Activated CD4-positive, alpha-beta T cell treated with anti-CD3 and anti-CD28 coated beads for 36 hours (primary cell): ENCODE measurements at regions of chr14 and their contacts with region 1.

Region 1: GRCh38 chr14:58297762-58298476 is 436 bp upstream of the ARID4A start:
- DNase-seq: peak; percentile 99
- ATAC-seq: peak; percentile 89
- H3K4me3 Mint-ChIP-seq: no peak overlapping the region
- H3K27ac Mint-ChIP-seq: no peak overlapping the region
- H3K4me1 Mint-ChIP-seq: peaks cover 38% of the 10 kb centered on the region
- H3K27me3 Mint-ChIP-seq: no peaks in the 10 kb centered on the region

Region 2: GRCh38 chr14:57268161-57269069 is 1029.5 kb before region 1 on chr14 and contains the starts of genes AP5M1 and EXOC5:
- CTCF ChIA-PET with region 1: no interaction called
- POLR2A ChIA-PET with region 1: no interaction called
- intact Hi-C with region 1: loop called in 1 of 2 experiments (anchors 2 kb)
- DNase-seq: peak; percentile 96
- ATAC-seq: peak; percentile 93
- H3K4me3 Mint-ChIP-seq: peak within 1 kb of the TSS; percentile 90
- H3K27ac Mint-ChIP-seq: peak within 1 kb of the TSS; percentile 99
- H3K4me1 Mint-ChIP-seq: peaks cover 53% of the 10 kb centered on the region
- H3K27me3 Mint-ChIP-seq: no peaks in the 10 kb centered on the region
- total RNA-seq, gene AP5M1: 30.8 to 32.7 TPM
- total RNA-seq, gene EXOC5: 66.5 to 80.2 TPM

Region 3: GRCh38 chr14:58199726-58200479 is 98.0 kb before region 1 on chr14 and contains the start of gene ACTR10:
- CTCF ChIA-PET with region 1: interaction called, 4 read pairs
- POLR2A ChIA-PET with region 1: interaction called, 13 read pairs
- intact Hi-C with region 1: loop called (anchors 1 kb)
- DNase-seq: peak; percentile 93
- ATAC-seq: peak; percentile 93
- H3K4me3 Mint-ChIP-seq: peak within 1 kb of the TSS; percentile 97
- H3K27ac Mint-ChIP-seq: peak within 1 kb of the TSS; percentile 92
- H3K4me1 Mint-ChIP-seq: peaks cover 38% of the 10 kb centered on the region
- H3K27me3 Mint-ChIP-seq: no peaks in the 10 kb centered on the region
- total RNA-seq, gene ACTR10: 31.2 to 32.3 TPM

Region 4: GRCh38 chr14:58244556-58245387 is 53.1 kb before region 1 on chr14 and contains the start of gene PSMA3:
- CTCF ChIA-PET with region 1: interaction called, 11 read pairs
- POLR2A ChIA-PET with region 1: interaction called, 15 read pairs
- intact Hi-C with region 1: loop called (anchors 1 kb)
- DNase-seq: peak; percentile 98
- ATAC-seq: peak; percentile 93
- H3K4me3 Mint-ChIP-seq: peak within 1 kb of the TSS; percentile 96
- H3K27ac Mint-ChIP-seq: peak within 1 kb of the TSS; percentile 96
- H3K4me1 Mint-ChIP-seq: peaks cover 40% of the 10 kb centered on the region
- H3K27me3 Mint-ChIP-seq: no peaks in the 10 kb centered on the region
- total RNA-seq, gene PSMA3: 342 to 425 TPM

Region 5: GRCh38 chr14:58280954-58281787 is 16.7 kb before region 1 on chr14:
- CTCF ChIA-PET with region 1: interaction called, 6 read pairs
- POLR2A ChIA-PET with region 1: interaction called, 11 read pairs
- intact Hi-C with region 1: loop called (anchors 1 kb)
- DNase-seq: peak; percentile 56
- ATAC-seq: peak; percentile 87
- H3K4me3 Mint-ChIP-seq: peak overlapping the region; percentile 50
- H3K27ac Mint-ChIP-seq: peak overlapping the region; percentile 95
- H3K4me1 Mint-ChIP-seq: peaks cover 75% of the 10 kb centered on the region
- H3K27me3 Mint-ChIP-seq: no peaks in the 10 kb centered on the region

Region 6: GRCh38 chr14:58362798-58363412 is 65.0 kb after region 1 on chr14:
- CTCF ChIA-PET with region 1: no interaction called
- POLR2A ChIA-PET with region 1: no interaction called
- intact Hi-C with region 1: no loop called
- DNase-seq: no peak
- ATAC-seq: peak; percentile 63
- H3K4me3 Mint-ChIP-seq: no peak overlapping the region
- H3K27ac Mint-ChIP-seq: no peak overlapping the region
- H3K4me1 Mint-ChIP-seq: peaks cover 8% of the 10 kb centered on the region
- H3K27me3 Mint-ChIP-seq: no peaks in the 10 kb centered on the region

Region 7: DNA sequence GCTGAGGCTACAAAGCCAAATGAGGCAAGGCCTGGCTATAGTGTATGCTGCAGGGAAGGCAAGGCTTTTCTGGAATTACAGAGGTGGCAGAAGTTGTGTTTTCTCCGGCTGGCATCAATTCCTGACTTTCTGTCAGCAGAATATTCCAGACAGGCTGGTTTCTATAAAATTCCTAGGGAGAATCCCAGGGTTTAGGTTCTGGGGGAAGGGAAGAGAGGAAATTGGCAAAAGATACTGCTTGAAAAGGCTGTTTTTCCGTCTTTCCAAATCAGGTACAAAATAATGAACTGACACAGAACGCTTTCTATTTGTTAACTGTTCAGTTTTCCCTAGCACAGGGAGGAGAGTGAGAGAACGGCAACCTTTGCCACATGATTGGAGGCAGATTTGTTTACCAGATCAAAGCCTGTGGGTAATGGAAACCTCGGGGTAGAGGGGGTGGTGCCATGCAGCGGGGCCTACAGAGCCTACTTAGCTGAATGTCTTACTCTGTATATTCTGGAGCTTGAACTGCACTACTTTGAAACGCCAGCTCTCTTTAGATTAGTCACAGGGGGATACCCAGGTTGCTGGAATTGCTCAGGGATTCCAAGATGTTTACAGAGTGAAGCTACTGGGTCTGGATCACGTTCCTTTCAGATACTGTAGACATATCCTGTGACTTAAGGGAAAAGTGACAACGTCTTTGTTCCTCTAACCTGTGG is 274.0 kb after region 1 on chr14:
- CTCF ChIA-PET with region 1: no interaction called
- POLR2A ChIA-PET with region 1: interaction called, 3 read pairs
- intact Hi-C with region 1: loop called in 1 of 2 experiments (anchors 5 kb)
- DNase-seq: peak; percentile 83
- ATAC-seq: peak; percentile 90
- H3K4me3 Mint-ChIP-seq: peak overlapping the region; percentile 45
- H3K27ac Mint-ChIP-seq: peak overlapping the region; percentile 93
- H3K4me1 Mint-ChIP-seq: peaks cover 44% of the 10 kb centered on the region
- H3K27me3 Mint-ChIP-seq: no peaks in the 10 kb centered on the region